Left ventricle myocardium inferior (tissue), 1 donor: ENCODE measurements at regions of chr1 and their contacts with region 1.

Region 1: GRCh38 chr1:200040481-200041138 is 13.1 kb downstream of the NR5A2 start:
- DNase-seq: no peak
- H3K4me3 ChIP-seq: peak overlapping the region; percentile 71
- H3K27ac ChIP-seq: peak overlapping the region; percentile 49
- H3K4me1 ChIP-seq: peaks cover 55% of the 10 kb centered on the region
- H3K27me3 ChIP-seq: peaks cover 100% of the 10 kb centered on the region
- CTCF ChIP-seq: no peak

Region 2: DNA sequence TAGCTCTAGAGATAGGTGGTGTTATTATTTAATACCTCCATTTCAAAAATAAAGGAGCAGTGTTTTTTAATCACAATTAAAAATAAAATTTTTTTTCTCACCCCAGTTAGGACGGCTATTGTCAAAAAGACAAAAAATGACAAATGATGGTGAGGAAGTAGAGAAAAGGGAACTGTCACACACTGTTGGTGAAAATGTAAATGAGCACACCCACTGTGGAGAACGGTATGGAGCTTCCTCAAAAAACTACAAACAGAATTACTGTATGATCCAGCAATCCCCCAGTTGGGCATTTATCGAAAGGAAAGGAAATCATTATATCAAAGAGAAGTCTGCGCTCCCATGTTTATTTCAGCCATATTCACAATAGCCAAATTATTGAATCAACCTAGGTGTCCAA is 161.8 kb before region 1 on chr1:
- intact Hi-C with region 1: no loop called
- DNase-seq: no peak
- H3K4me3 ChIP-seq: no peak overlapping the region
- H3K27ac ChIP-seq: no peak overlapping the region
- H3K4me1 ChIP-seq: no peaks in the 10 kb centered on the region
- H3K27me3 ChIP-seq: no peaks in the 10 kb centered on the region
- CTCF ChIP-seq: no peak

Region 3: GRCh38 chr1:199982606-199983005 is 58.0 kb before region 1 on chr1:
- intact Hi-C with region 1: loop called (anchors 10 kb)
- DNase-seq: no peak
- H3K4me3 ChIP-seq: no peak overlapping the region
- H3K27ac ChIP-seq: no peak overlapping the region
- H3K4me1 ChIP-seq: peaks cover 7% of the 10 kb centered on the region
- H3K27me3 ChIP-seq: no peaks in the 10 kb centered on the region
- CTCF ChIP-seq: no peak

Region 4: GRCh38 chr1:200005165-200005564 is 35.4 kb before region 1 on chr1:
- intact Hi-C with region 1: no loop called
- DNase-seq: no peak
- H3K4me3 ChIP-seq: no peak overlapping the region
- H3K27ac ChIP-seq: no peak overlapping the region
- H3K4me1 ChIP-seq: no peaks in the 10 kb centered on the region
- H3K27me3 ChIP-seq: no peaks in the 10 kb centered on the region
- CTCF ChIP-seq: no peak